Naive thymus-derived CD4-positive, alpha-beta T cell (primary cell): ENCODE measurements at regions of chr3 and their contacts with region 1.

Region 1: GRCh38 chr3:109831403-109831802 is 494.1 kb upstream of the DPPA4 start:
- DNase-seq: no peak
- ATAC-seq: no peak
- H3K4me3 ChIP-seq: no peak overlapping the region
- H3K4me3 Mint-ChIP-seq: no peak overlapping the region
- H3K27ac ChIP-seq: no peak overlapping the region
- H3K27ac Mint-ChIP-seq: peak overlapping the region in 1 of 9 donors; percentile 7
- H3K4me1 ChIP-seq: no peaks in the 10 kb centered on the region
- H3K4me1 Mint-ChIP-seq: no peaks in the 10 kb centered on the region
- H3K27me3 ChIP-seq: no peaks in the 10 kb centered on the region
- H3K27me3 Mint-ChIP-seq: no peaks in the 10 kb centered on the region

Region 2: DNA sequence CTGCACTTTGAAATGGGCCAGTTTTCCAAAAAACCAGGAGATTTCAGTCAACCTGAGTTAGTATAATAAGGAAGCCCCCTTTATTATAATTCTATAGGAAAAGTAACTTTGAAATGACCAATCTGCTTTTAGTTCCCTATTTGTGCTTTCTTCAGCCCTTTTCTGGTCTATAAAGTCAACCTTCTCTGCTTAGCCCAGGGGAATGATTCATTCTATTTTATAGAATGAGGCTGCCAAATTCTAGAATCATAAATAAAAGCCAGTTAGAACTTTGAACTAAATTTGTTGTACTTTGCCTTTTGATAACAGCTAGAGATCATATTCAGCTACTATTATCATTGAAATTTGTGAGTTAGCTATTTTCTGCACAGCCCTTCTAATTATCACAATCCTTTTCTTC is 1266.8 kb before region 1 on chr3:
- CTCF ChIA-PET with region 1: no interaction called
- POLR2A ChIA-PET with region 1: no interaction called
- intact Hi-C with region 1: no loop called
- DNase-seq: no peak
- ATAC-seq: no peak
- H3K4me3 ChIP-seq: no peak overlapping the region
- H3K4me3 Mint-ChIP-seq: no peak overlapping the region
- H3K27ac ChIP-seq: no peak overlapping the region
- H3K27ac Mint-ChIP-seq: no peak overlapping the region
- H3K4me1 ChIP-seq: no peaks in the 10 kb centered on the region
- H3K4me1 Mint-ChIP-seq: peaks cover 0 to 13% (median 0%) of the 10 kb centered on the region in 7 donors
- H3K27me3 ChIP-seq: no peaks in the 10 kb centered on the region
- H3K27me3 Mint-ChIP-seq: no peaks in the 10 kb centered on the region

Region 3: DNA sequence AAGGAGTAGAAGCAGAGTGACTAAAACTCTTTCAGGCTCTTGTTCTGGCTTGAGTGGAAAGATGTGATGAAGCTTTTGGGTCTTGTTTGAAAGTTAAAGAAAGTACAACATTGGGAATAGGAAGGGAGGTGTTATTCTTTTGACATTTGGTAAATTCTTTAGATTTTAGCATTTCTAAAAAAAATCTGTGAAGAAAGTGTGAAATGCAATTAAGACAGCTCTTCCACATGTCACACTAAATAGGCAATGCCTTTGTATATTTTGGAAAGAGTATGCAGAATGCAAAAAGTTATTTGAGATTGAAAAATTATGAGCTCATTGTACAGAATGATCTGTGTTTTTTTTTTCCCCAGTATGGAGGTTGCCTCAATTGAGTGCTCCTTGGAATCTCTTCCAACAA is 38.2 kb after region 1 on chr3:
- CTCF ChIA-PET with region 1: no interaction called
- POLR2A ChIA-PET with region 1: no interaction called
- intact Hi-C with region 1: loop called in 1 of 2 experiments (anchors 5 kb)
- DNase-seq: no peak
- ATAC-seq: no peak
- H3K4me3 ChIP-seq: no peak overlapping the region
- H3K4me3 Mint-ChIP-seq: no peak overlapping the region
- H3K27ac ChIP-seq: no peak overlapping the region
- H3K27ac Mint-ChIP-seq: peak overlapping the region in 1 of 9 donors; percentile 6
- H3K4me1 ChIP-seq: no peaks in the 10 kb centered on the region
- H3K4me1 Mint-ChIP-seq: no peaks in the 10 kb centered on the region
- H3K27me3 ChIP-seq: no peaks in the 10 kb centered on the region
- H3K27me3 Mint-ChIP-seq: no peaks in the 10 kb centered on the region